HCT116 (cell line): ENCODE measurements at regions of chr12 and their contacts with region 1.

Region 1: DNA sequence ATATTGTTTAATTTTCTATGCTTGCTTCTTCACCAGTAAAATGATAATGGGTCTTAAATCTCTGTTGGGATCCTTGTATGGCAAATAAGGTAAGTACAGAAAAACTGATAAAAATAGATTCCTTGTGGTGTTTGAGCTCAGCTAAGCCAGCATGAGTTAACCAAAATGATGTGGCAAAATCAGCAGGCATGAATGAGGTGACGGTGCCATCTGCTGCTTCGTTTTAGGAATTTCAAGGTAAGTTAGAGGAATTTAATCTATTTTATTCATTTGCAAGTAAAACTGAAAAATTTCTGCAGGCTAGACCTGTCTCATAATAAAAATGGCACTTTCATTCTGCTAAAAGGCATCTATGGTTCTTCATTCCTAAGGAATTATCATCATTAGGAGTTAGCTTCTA is 10.0 kb upstream of the CLEC7A start:
- DNase-seq: peak; percentile 44
- ATAC-seq: peak; percentile 55; the same call in 1 of the 2 replicates
- H3K4me3 ChIP-seq: no peak overlapping the region
- H3K27ac ChIP-seq: no peak overlapping the region
- H3K4me1 ChIP-seq: no peaks in the 10 kb centered on the region
- H3K27me3 ChIP-seq: no peaks in the 10 kb centered on the region
- CTCF ChIP-seq: peak; percentile 29 to 66 (median 66); a peak in 4 of 6 replicates
- POLR2A ChIP-seq: no peak
- RAD21 ChIP-seq: peak; percentile 79

Region 2: DNA sequence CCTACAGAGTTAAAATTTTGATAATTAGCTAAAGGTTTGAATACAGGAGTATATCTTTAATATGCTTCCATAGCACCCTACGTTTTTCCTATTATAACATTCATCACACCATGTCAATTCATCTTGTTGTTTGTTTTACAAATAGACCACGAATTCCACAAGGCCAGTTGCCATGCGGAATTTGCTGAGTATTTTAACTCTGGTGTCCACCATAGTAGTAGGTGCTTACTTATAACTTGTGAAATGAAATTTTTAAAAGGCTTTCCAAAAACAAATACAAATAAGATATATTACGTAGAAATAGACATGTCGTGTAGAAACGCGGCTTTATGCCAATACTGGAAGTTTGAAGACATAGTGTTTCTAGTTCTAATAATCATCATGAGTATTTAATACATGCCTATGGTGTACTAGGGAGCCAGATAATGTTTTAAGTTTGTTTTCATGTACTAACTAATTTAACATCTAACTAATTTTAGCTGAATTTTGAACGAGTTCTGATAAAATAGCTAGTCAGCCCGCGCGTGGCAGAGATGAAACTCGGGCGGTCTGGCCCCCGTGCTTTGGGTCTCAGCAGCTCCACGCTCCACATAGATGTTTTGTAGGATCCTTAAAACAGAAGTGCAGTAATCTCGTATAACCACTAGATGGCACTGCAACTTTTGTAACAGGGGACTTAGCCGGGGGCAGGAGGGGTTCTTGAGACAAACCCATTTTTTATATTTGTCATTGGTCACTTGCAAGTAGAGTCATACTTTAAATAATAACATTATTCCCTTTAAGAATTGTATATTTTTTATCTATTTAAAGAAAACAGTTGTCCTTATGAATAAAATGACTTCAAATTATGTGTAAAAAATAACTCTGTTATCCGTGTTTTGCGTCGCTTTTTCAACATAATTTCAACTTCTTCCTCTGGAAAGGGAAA is 389.5 kb before region 1 on chr12:
- CTCF ChIA-PET with region 1: interaction called, 29 read pairs
- POLR2A ChIA-PET with region 1: no interaction called
- RAD21 ChIA-PET with region 1: no interaction called
- intact Hi-C with region 1: loop called (anchors 2 kb)
- DNase-seq: peak; percentile 46
- ATAC-seq: peak; percentile 87
- H3K4me3 ChIP-seq: no peak overlapping the region
- H3K27ac ChIP-seq: no peak overlapping the region
- H3K4me1 ChIP-seq: peaks cover 0 to 3% of the 10 kb centered on the region in 2 experiments; a peak in 2 of 4 replicates
- H3K27me3 ChIP-seq: peaks cover 23% of the 10 kb centered on the region
- CTCF ChIP-seq: peak; percentile 70 to 78 (median 72); a peak in 5 of 6 replicates
- POLR2A ChIP-seq: no peak
- RAD21 ChIP-seq: peak; percentile 64

Region 3: GRCh38 chr12:9813821-9814809 is 325.9 kb before region 1 on chr12:
- CTCF ChIA-PET with region 1: no interaction called
- POLR2A ChIA-PET with region 1: no interaction called
- RAD21 ChIA-PET with region 1: no interaction called
- intact Hi-C with region 1: loop called (anchors 2 kb)
- DNase-seq: peak; percentile 13
- ATAC-seq: peak; percentile 99
- H3K4me3 ChIP-seq: no peak overlapping the region
- H3K27ac ChIP-seq: no peak overlapping the region
- H3K4me1 ChIP-seq: no peaks in the 10 kb centered on the region
- H3K27me3 ChIP-seq: peaks cover 64% of the 10 kb centered on the region
- CTCF ChIP-seq: peak; percentile 37 to 85 (median 78); a peak in 5 of 6 replicates
- POLR2A ChIP-seq: no peak
- RAD21 ChIP-seq: peak; percentile 62

Region 4: GRCh38 chr12:9940375-9940774 is 199.6 kb before region 1 on chr12:
- CTCF ChIA-PET with region 1: interaction called, 7 read pairs
- POLR2A ChIA-PET with region 1: no interaction called
- RAD21 ChIA-PET with region 1: no interaction called
- intact Hi-C with region 1: loop called (anchors 5 kb)
- DNase-seq: no peak
- ATAC-seq: 0 out of 2 replicates have a peak, but pooled peaks have one; percentile 38
- H3K4me3 ChIP-seq: no peak overlapping the region
- H3K27ac ChIP-seq: no peak overlapping the region
- H3K4me1 ChIP-seq: no peaks in the 10 kb centered on the region
- H3K27me3 ChIP-seq: peaks cover 52% of the 10 kb centered on the region
- CTCF ChIP-seq: peak; percentile 14 to 54 (median 36); a peak in 3 of 6 replicates
- POLR2A ChIP-seq: no peak
- RAD21 ChIP-seq: peak; percentile 30; the same call in 1 of the 2 replicates

Region 5: DNA sequence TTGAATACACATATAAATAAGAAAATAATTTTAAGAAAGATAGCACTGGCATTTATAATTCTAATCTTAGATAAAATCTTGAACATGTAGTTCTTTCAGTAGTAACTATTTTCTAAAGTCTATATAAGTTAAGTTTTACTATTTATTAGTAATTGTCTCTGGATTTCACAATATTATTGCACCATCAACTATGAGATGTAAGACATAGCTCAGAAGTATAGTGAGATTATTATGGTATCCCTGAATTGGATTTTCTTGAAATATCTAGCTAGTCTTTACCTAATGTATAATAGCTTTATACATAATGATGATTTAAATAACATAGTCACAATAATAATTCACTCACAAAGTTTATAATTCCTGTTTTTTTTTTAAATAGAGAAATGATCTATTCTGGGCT is 162.1 kb before region 1 on chr12:
- CTCF ChIA-PET with region 1: no interaction called
- POLR2A ChIA-PET with region 1: no interaction called
- RAD21 ChIA-PET with region 1: no interaction called
- intact Hi-C with region 1: no loop called
- DNase-seq: no peak
- ATAC-seq: no peak
- H3K4me3 ChIP-seq: no peak overlapping the region
- H3K27ac ChIP-seq: no peak overlapping the region
- H3K4me1 ChIP-seq: no peaks in the 10 kb centered on the region
- H3K27me3 ChIP-seq: peaks cover 40% of the 10 kb centered on the region
- CTCF ChIP-seq: no peak
- POLR2A ChIP-seq: no peak
- RAD21 ChIP-seq: no peak

Region 6: DNA sequence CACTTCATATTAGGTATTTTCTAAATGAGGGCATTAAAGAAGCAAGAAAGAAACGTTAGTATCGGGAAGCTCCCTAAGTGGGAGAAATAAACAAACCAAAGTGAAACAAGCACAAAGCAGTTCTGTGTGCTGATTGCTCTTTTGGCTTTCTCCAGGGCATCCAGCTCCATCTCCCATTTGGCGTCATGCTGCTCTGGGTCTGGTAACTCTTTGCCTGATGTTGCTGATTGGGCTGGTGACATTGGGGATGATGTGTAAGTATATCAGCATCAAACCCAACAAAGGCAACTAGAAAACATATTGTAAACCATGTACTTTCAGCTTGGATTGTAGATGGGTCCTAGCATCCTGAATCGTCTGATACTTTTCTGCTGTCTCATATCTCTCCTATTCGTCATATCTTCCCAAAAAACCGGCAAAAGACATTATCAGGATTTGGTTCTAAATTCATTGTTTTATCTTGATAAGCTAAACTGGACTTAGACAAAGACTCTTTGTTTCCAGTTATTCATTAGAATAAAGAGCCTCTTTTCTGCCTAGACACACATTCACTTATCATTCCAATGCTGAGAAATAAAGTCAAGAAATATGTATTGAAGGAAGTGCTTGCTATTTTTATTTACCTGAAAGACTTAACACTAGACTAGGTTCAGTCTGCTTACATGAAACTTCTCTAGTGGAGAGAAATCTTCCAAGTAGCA is 127.2 kb before region 1 on chr12:
- CTCF ChIA-PET with region 1: interaction called, 22 read pairs
- POLR2A ChIA-PET with region 1: interaction called, 3 read pairs
- RAD21 ChIA-PET with region 1: interaction called in 1 of 2 experiments, 7 read pairs
- intact Hi-C with region 1: loop called (anchors 1 kb)
- DNase-seq: no peak
- ATAC-seq: no peak
- H3K4me3 ChIP-seq: no peak overlapping the region
- H3K27ac ChIP-seq: no peak overlapping the region
- H3K4me1 ChIP-seq: no peaks in the 10 kb centered on the region
- H3K27me3 ChIP-seq: peaks cover 47% of the 10 kb centered on the region
- CTCF ChIP-seq: no peak
- POLR2A ChIP-seq: no peak
- RAD21 ChIP-seq: no peak

Region 7: GRCh38 chr12:10033783-10034545 is 106.0 kb before region 1 on chr12:
- CTCF ChIA-PET with region 1: interaction called, 16 read pairs
- POLR2A ChIA-PET with region 1: no interaction called
- RAD21 ChIA-PET with region 1: interaction called in 1 of 2 experiments, 3 read pairs
- intact Hi-C with region 1: loop called (anchors 1 kb)
- DNase-seq: no peak
- ATAC-seq: 0 out of 2 replicates have a peak, but pooled peaks have one; percentile 25
- H3K4me3 ChIP-seq: no peak overlapping the region
- H3K27ac ChIP-seq: no peak overlapping the region
- H3K4me1 ChIP-seq: no peaks in the 10 kb centered on the region
- H3K27me3 ChIP-seq: peaks cover 6% of the 10 kb centered on the region
- CTCF ChIP-seq: peak; percentile 4 to 55 (median 51); a peak in 5 of 6 replicates
- POLR2A ChIP-seq: no peak
- RAD21 ChIP-seq: peak; percentile 60

Region 8: DNA sequence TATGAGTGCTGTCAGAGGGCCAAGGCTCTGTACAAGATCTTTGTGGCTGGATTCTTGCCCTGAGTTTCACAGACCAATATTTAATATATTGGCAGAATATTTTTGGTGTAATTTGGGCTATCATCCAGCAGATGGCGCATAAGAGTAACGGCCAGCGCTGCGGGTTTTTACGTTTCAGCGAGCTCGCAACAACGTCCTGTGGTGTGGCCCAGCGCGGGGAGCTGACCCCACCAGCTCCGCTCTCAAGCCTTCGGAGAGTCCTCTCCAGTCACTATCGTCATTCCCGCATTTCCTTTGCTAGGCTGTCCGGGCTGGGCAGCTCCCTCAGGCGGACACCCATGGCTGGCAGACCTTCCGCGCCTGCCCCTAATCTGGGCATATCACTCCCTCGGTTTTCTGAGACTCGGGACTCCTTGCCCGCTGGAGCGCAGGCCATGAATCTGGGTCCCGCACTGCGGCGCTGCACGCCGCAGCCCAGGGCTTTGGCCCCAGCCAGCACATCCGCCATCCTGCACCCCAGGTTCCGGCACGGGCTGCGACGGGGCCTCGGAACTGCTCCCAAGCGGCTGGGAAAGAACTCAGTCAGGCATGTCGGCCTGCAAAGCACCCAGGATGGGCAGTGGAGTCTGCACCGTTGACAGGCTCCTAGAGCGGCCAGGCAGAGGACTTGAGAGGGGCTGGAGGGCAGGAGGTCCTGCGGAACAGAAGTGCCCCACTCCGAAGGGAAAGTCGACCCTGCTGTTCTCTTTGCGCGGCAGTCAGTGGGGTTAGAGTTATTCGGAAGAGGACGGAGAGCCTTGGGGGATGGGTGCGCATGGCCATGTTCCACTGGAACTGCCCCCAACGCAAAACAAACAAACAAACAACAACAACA is 13.5 kb after region 1 on chr12:
- CTCF ChIA-PET with region 1: interaction called, 11 read pairs
- POLR2A ChIA-PET with region 1: interaction called, 4 read pairs
- RAD21 ChIA-PET with region 1: no interaction called
- intact Hi-C with region 1: no loop called
- DNase-seq: peak; percentile 21
- ATAC-seq: peak; percentile 81
- H3K4me3 ChIP-seq: peak overlapping the region; percentile 23 to 38; a peak in 3 of 4 replicates
- H3K27ac ChIP-seq: peak overlapping the region; percentile 4; the same call in 1 of the 2 replicates
- H3K4me1 ChIP-seq: peaks cover 0 to 5% of the 10 kb centered on the region in 2 experiments; a peak in 1 of 4 replicates
- H3K27me3 ChIP-seq: no peaks in the 10 kb centered on the region
- CTCF ChIP-seq: peak; percentile 65 to 78 (median 74)
- POLR2A ChIP-seq: no peak
- RAD21 ChIP-seq: peak; percentile 65